A549 (cell line): ENCODE measurements at regions of chr9 and their contacts with region 1.

Region 1: GRCh38 chr9:131366761-131367401 is 27.0 kb upstream of the PRRC2B start:
- DNase-seq: peak; percentile 65 to 89
- ATAC-seq: peak; percentile 93 to 95
- H3K4me3 ChIP-seq: no peak overlapping the region
- H3K27ac ChIP-seq: peak overlapping the region in 1 of 2 experiments; percentile 69; a peak in 3 of 6 replicates
- H3K4me1 ChIP-seq: peaks cover 16% of the 10 kb centered on the region
- CTCF ChIP-seq: peak; percentile 47
- EP300 ChIP-seq: no peak
- POLR2A ChIP-seq: no peak
- RAD21 ChIP-seq: peak; percentile 66 to 73

Region 2: GRCh38 chr9:131255676-131256197 is 111.1 kb before region 1 on chr9:
- CTCF ChIA-PET with region 1: no interaction called
- POLR2A ChIA-PET with region 1: no interaction called
- DNase-seq: no peak
- ATAC-seq: peak in 1 of 2 experiments; percentile 11; a peak in 3 of 6 replicates
- H3K4me3 ChIP-seq: no peak overlapping the region
- H3K27ac ChIP-seq: peak overlapping the region in 1 of 2 experiments; percentile 88; a peak in 3 of 6 replicates
- H3K4me1 ChIP-seq: peaks cover 8% of the 10 kb centered on the region
- CTCF ChIP-seq: no peak
- EP300 ChIP-seq: no peak
- POLR2A ChIP-seq: no peak
- RAD21 ChIP-seq: no peak

Region 3: GRCh38 chr9:131393622-131394463 is 27.0 kb after region 1 on chr9 and contains the start of gene PRRC2B:
- CTCF ChIA-PET with region 1: interaction called, 3 read pairs
- POLR2A ChIA-PET with region 1: interaction called, 23 read pairs
- DNase-seq: peak; percentile 86 to 88
- ATAC-seq: peak; percentile 80 to 89
- H3K4me3 ChIP-seq: peak within 1 kb of the TSS; percentile 61
- H3K27ac ChIP-seq: peak within 1 kb of the TSS; percentile 85 to 99
- H3K4me1 ChIP-seq: peaks cover 45% of the 10 kb centered on the region
- CTCF ChIP-seq: peak; percentile 90
- EP300 ChIP-seq: no peak; a peak in 2 of 5 replicates
- POLR2A ChIP-seq: peak; percentile 90
- RAD21 ChIP-seq: peak; percentile 18 to 70; a peak in 3 of 5 replicates
- polyA plus RNA-seq, gene PRRC2B: 35.6 and 57.0 TPM in 2 replicates

Region 4: DNA sequence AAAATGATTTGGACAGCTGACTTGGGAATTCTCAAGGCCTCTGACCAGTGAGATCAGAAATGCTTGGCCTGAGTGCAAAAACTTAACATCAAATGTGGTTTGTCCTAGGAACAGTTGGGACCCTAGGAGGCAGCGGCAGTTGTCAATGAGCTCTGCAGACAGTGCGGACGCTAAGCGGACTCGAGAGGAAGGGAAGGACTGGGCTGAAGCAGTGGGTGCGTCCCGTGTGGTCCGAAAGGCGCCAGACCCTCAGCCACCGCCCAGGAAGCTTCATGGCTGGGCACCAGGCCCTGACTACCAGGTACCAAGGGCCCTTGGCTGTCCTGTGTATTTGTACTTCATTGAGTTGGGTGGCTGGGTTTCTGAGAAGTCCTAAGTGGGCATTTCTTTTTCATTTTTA is 92.2 kb after region 1 on chr9:
- CTCF ChIA-PET with region 1: interaction called, 10 read pairs
- POLR2A ChIA-PET with region 1: no interaction called
- DNase-seq: no peak
- ATAC-seq: no peak
- H3K4me3 ChIP-seq: no peak overlapping the region
- H3K27ac ChIP-seq: no peak overlapping the region
- H3K4me1 ChIP-seq: no peaks in the 10 kb centered on the region
- CTCF ChIP-seq: no peak
- EP300 ChIP-seq: no peak
- POLR2A ChIP-seq: no peak
- RAD21 ChIP-seq: no peak

Region 5: GRCh38 chr9:131709771-131710454 is 343.0 kb after region 1 on chr9:
- CTCF ChIA-PET with region 1: no interaction called
- POLR2A ChIA-PET with region 1: no interaction called
- DNase-seq: no peak
- ATAC-seq: no peak
- H3K4me3 ChIP-seq: no peak overlapping the region
- H3K27ac ChIP-seq: peak overlapping the region in 1 of 2 experiments; percentile 84; a peak in 4 of 6 replicates
- H3K4me1 ChIP-seq: peaks cover 74% of the 10 kb centered on the region
- CTCF ChIP-seq: no peak
- EP300 ChIP-seq: no peak
- POLR2A ChIP-seq: no peak
- RAD21 ChIP-seq: no peak

Region 6: GRCh38 chr9:131854896-131855613 is 488.2 kb after region 1 on chr9:
- CTCF ChIA-PET with region 1: no interaction called
- POLR2A ChIA-PET with region 1: no interaction called
- DNase-seq: no peak
- ATAC-seq: no peak
- H3K4me3 ChIP-seq: no peak overlapping the region
- H3K27ac ChIP-seq: no peak overlapping the region
- H3K4me1 ChIP-seq: no peaks in the 10 kb centered on the region
- CTCF ChIP-seq: no peak
- EP300 ChIP-seq: no peak
- POLR2A ChIP-seq: no peak
- RAD21 ChIP-seq: no peak